Endothelial cell of umbilical vein (primary cell): ENCODE measurements at regions of chr1 and their contacts with region 1.

Region 1: GRCh38 chr1:77683160-77684148 is 996 bp upstream of the ZZZ3 start:
- DNase-seq: peak; percentile 92
- H3K4me3 ChIP-seq: peak overlapping the region; percentile 42 to 73 (median 52)
- H3K27ac ChIP-seq: peak overlapping the region; percentile 69
- H3K4me1 ChIP-seq: peaks cover 23% of the 10 kb centered on the region
- H3K27me3 ChIP-seq: no peaks in the 10 kb centered on the region
- CTCF ChIP-seq: peak; percentile 86 to 92
- POLR2A ChIP-seq: no peak

Region 2: GRCh38 chr1:77143529-77144121 is 539.8 kb before region 1 on chr1:
- CTCF ChIA-PET with region 1: no interaction called
- POLR2A ChIA-PET with region 1: no interaction called
- dilution Hi-C with region 1: no loop called
- intact Hi-C with region 1: loop called (anchors 1 kb)
- DNase-seq: peak; percentile 16
- H3K4me3 ChIP-seq: no peak overlapping the region
- H3K27ac ChIP-seq: no peak overlapping the region
- H3K4me1 ChIP-seq: no peaks in the 10 kb centered on the region
- H3K27me3 ChIP-seq: no peaks in the 10 kb centered on the region
- CTCF ChIP-seq: no peak
- POLR2A ChIP-seq: no peak

Region 3: GRCh38 chr1:77281491-77282186 is 401.8 kb before region 1 on chr1 and contains the start of gene AK5:
- CTCF ChIA-PET with region 1: no interaction called
- POLR2A ChIA-PET with region 1: no interaction called
- dilution Hi-C with region 1: no loop called
- intact Hi-C with region 1: loop called (anchors 10 kb)
- DNase-seq: peak; percentile 59
- H3K4me3 ChIP-seq: peak within 1 kb of the TSS; percentile 42 to 62 (median 57)
- H3K27ac ChIP-seq: no peak within 1 kb of the TSS
- H3K4me1 ChIP-seq: peaks cover 17% of the 10 kb centered on the region
- H3K27me3 ChIP-seq: peaks cover 3 to 21% of the 10 kb centered on the region in 2 experiments
- CTCF ChIP-seq: no peak
- POLR2A ChIP-seq: no peak
- total RNA-seq, gene AK5: 3.3 and 7.5 TPM in 2 replicates

Region 4: GRCh38 chr1:77514921-77515776 is 168.3 kb before region 1 on chr1:
- CTCF ChIA-PET with region 1: no interaction called
- POLR2A ChIA-PET with region 1: no interaction called
- dilution Hi-C with region 1: no loop called
- intact Hi-C with region 1: loop called (anchors 5 kb)
- DNase-seq: peak; percentile 68
- H3K4me3 ChIP-seq: no peak overlapping the region
- H3K27ac ChIP-seq: peak overlapping the region; percentile 74
- H3K4me1 ChIP-seq: peaks cover 32% of the 10 kb centered on the region
- H3K27me3 ChIP-seq: no peaks in the 10 kb centered on the region
- CTCF ChIP-seq: peak in 1 of 2 donors; percentile 24
- POLR2A ChIP-seq: no peak

Region 5: GRCh38 chr1:77579547-77579946 is 103.9 kb before region 1 on chr1:
- CTCF ChIA-PET with region 1: no interaction called
- POLR2A ChIA-PET with region 1: no interaction called
- dilution Hi-C with region 1: no loop called
- intact Hi-C with region 1: loop called (anchors 5 kb)
- DNase-seq: no peak
- H3K4me3 ChIP-seq: no peak overlapping the region
- H3K27ac ChIP-seq: no peak overlapping the region
- H3K4me1 ChIP-seq: no peaks in the 10 kb centered on the region
- H3K27me3 ChIP-seq: no peaks in the 10 kb centered on the region
- CTCF ChIP-seq: no peak
- POLR2A ChIP-seq: no peak

Region 6: DNA sequence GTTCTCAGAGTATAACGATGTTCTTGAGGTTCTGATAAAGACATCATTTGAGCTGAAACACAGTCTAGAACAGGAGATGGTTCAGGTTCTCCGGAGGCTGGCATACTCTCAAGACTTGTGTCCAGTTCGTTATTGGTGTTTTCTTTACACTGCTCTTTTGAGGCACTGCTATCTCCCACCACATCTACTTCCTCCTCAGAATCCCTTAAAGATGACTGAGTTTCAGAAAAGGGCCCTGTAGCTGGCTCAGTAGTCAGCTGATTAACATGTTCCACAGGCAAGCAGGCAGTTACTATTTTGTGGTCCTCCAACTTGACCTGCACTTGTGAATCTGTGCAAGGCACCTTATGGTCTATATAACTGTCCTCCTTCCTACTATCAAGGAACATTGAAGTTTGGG is 51.2 kb before region 1 on chr1:
- CTCF ChIA-PET with region 1: no interaction called
- POLR2A ChIA-PET with region 1: no interaction called
- dilution Hi-C with region 1: no loop called
- intact Hi-C with region 1: no loop called
- DNase-seq: no peak
- H3K4me3 ChIP-seq: no peak overlapping the region
- H3K27ac ChIP-seq: no peak overlapping the region
- H3K4me1 ChIP-seq: no peaks in the 10 kb centered on the region
- H3K27me3 ChIP-seq: no peaks in the 10 kb centered on the region
- CTCF ChIP-seq: no peak
- POLR2A ChIP-seq: no peak

Region 7: GRCh38 chr1:77759071-77760028 is 75.9 kb after region 1 on chr1 and contains the start of gene USP33:
- CTCF ChIA-PET with region 1: no interaction called
- POLR2A ChIA-PET with region 1: no interaction called
- dilution Hi-C with region 1: no loop called
- intact Hi-C with region 1: loop called (anchors 2 kb)
- DNase-seq: peak; percentile 79
- H3K4me3 ChIP-seq: peak within 1 kb of the TSS; percentile 45 to 88 (median 85)
- H3K27ac ChIP-seq: peak within 1 kb of the TSS; percentile 51
- H3K4me1 ChIP-seq: peaks cover 18% of the 10 kb centered on the region
- H3K27me3 ChIP-seq: no peaks in the 10 kb centered on the region
- CTCF ChIP-seq: no peak
- POLR2A ChIP-seq: peak; percentile 60
- total RNA-seq, gene USP33: 44.1 and 46.4 TPM in 2 replicates

Region 8: DNA sequence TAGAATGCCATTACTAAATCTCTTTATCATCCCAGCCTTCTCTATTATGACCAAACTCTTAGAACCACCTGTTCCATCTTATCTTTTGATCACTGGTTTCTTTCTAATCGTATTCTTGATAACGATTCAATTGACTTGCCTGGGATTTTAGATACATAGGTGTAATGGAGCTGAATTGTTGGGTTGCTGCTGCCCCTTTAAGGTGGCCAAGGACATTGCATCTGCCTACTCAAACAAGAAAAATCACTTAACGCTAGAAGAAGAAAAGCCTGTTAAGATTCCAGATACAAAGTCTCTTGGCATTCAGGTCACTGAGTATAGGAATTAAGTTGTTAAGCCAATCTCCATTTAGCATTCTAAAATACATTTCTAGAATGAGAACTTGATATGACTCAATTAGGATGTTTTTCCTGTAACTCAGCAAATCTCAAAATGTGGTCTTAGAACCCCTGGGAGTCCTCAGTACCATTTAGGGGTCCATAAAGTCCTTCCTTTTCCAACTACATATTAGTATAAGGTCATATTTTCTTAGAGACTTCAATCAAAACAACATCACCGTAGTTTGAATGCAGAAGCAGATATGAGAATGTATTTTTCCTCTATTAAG is 217.3 kb after region 1 on chr1:
- CTCF ChIA-PET with region 1: interaction called, 3 read pairs
- POLR2A ChIA-PET with region 1: no interaction called
- dilution Hi-C with region 1: no loop called
- intact Hi-C with region 1: loop called (anchors 1 kb)
- DNase-seq: peak; percentile 83
- H3K4me3 ChIP-seq: no peak overlapping the region
- H3K27ac ChIP-seq: no peak overlapping the region
- H3K4me1 ChIP-seq: peaks cover 4% of the 10 kb centered on the region
- H3K27me3 ChIP-seq: no peaks in the 10 kb centered on the region
- CTCF ChIP-seq: peak; percentile 56 to 63
- POLR2A ChIP-seq: no peak